Cardiac septum (tissue), 1 donor: ENCODE measurements at regions of chr9 and their contacts with region 1.

Region 1: DNA sequence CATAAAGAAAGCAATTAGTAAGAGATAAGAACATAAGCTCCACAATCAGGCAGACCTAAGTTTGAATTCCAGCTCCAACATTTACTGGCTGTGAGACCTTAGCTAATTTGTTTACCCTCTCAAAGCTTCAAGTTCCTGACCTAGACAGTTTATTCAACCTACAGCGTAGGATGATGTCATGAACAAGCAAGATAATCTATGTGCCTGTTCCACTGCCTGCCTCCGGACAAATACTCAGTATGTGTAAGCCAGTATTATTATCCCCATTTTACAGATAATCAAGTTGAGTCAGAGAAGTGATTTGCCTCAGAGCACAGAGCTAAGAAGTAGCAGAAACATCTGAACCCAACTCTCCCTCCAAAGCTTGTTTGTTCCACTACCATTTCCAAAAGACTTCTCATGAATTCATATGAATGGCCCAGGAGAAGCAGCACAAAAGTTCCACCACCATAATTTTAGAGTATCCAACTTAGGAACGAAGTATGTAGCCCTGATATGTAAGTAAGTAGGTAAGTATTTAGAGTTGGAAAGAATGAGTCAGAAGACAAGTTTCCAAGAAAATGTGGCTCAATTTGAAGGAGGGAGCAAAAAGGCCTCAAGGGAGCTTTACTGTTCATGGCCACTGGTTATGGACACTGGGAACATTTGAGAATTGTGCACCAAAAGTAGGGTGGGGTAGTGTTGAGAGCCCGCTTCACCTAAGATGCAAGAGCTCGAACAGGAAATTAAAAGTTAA is 398.2 kb downstream of the NFIB start:
- DNase-seq: no peak

Region 2: DNA sequence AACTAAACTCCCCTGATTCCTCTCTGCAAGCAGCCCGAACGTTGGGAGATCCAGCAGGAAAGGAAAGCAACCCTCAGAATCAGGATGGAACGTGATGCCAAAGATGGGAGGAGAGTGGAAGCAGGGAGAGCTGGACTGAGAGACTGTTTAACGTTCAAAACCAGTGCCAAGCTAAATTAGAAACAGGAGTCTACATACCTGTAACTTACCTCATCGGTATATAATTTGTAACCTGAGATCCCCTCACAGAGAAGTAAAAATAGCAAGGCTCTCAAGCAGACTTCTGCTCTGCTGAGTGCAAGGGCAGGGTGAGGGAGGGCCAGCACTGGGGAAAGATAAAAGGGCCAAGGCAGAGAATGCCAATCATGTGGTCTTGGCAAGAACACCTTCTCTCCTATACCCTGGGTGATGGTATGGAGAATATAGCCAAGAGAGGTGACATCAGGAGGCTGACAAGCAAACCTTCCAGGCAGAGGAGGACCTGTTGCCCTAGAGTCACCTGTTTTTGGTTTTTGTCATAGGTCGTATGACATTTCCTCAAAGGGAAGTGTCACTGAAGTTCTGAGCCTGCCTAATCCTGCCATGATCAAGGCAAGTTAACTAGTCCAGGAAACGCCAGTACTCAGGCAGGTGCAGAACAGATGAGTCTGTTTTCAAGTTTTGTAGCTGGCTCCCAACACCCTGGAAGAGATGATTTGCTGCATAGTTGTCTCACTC is 73.9 kb before region 1 on chr9:
- intact Hi-C with region 1: loop called (anchors 5 kb)
- DNase-seq: no peak

Region 3: DNA sequence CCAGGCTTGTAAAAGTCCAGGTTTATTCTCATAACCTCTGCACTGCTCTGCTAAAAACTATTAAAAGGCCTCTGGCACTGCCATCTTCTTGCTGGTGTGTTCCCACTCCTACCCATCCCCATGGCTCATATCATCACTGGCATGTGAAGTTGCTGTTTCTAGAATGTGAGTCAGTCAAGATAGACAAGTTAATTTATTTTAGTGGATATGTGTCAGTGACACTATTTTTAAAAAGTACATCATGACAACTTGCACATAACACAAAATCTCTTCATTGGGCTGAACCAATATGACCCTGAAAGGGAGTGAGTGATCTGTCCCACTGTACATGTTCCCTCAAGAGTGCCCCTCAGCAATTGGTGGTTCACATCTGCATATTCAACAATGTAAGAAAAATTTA is 98.5 kb after region 1 on chr9:
- intact Hi-C with region 1: loop called (anchors 5 kb)
- DNase-seq: no peak

Region 4: DNA sequence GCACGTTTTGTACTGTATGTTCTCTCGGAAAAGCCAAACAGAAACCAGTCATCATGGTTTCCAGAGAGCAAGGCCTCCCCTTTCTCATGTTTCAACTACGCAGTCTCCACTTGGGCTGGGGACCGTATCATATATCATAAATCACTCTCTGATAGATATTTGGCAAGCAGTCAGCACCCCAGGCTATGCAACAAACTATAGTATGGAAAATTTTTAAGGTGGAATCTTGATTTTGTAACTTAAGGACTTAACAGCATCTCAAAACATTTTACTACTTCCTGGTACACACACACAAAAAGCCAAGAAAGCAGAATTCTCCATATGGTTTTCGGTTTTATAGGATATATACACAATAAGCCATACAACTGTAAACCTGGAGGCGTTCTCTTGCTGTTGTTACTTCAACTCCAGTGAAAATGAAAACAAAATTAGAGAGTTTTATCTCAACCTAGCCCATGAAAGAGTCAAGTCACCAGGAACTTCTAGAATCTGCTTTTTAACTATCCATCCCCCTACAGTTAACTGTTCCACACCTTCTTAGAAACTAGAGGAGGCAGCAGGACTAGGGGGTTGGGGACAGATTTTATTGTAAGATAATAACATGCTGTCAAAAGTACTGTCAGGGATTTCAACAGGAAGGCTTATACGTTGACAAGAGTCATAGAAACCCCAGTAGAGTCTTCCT is 114.8 kb after region 1 on chr9:
- intact Hi-C with region 1: loop called (anchors 5 kb)
- DNase-seq: no peak

Region 5: DNA sequence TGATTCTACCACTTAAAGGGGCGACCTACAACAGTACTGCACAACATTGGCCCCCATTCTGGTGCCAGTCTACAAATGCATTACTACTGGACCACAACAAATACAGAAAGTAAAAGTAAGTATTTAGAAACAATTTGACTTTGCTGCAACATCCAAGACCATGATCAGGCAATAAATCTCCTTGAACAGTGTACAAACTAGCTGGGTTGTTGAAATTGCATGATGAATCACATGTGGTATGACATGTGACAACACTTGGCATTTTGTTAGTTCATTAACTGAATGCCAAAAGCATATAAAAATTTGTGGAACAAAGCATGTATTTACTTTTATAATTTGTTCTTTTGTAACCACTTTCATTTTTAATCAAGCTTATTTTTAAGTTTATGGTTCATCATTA is 127.7 kb after region 1 on chr9:
- intact Hi-C with region 1: no loop called
- DNase-seq: no peak

Region 6: DNA sequence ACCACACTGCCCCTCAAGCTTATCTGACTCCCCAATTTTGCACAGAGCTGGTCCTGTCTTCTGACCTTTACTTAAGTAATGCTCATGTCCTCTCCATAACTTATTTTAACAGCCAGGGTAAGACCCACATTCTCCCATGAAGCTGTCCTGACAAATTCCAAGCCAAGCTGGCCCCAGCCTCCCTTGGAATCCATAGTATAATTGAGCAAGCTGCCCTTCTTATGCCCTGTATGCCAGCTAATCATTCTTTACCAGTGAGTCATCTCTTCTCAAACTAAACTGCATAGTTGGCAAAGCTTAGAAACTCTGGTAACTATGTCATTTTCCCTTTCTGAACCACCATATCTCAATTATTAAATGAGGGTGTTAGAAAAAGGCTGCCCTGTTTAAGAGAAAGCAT is 305.8 kb after region 1 on chr9:
- intact Hi-C with region 1: no loop called
- DNase-seq: no peak